ENCODE measurements at regions of chr17 and their contacts with region 1.

Region 1: GRCh38 chr17:65100316-65101140 is 36.6 kb upstream of the RGS9 start:
- DNase-seq: peak; percentile 91
- ATAC-seq: peak; percentile 96 to 97

Region 2: DNA sequence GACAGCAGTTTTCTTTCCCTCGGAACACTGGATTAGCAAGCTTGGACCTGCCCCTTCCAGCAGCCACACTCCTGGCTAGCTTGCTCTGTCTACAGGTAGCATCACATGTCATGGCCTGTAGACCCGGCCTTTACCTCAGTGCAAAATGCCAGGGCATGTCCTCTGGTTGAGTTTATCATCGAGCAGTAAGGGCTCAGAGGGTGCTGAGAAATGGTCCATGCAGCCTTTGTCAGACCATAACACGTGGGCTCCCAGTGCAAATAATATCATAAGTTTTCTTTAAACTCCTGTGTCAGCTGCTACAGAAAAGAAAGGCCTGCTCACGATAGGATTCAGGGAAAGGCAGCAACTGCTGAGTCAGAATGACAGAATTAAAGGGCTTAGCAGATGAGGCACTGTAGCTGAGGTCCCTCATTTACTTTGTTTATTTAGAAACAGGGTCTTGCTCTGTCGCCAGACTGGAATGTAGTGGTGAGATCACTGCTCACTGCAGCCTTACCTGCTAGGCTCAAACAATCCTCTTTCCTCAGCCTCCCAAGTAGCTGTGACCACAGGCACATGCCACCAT is 36.0 kb before region 1 on chr17:
- intact Hi-C with region 1: loop called in 1 of 2 experiments (anchors 5 kb)
- DNase-seq: no peak
- ATAC-seq: no peak

Measured in left cardiac atrium (tissue), 4 donors.